ENCODE measurements at regions of chr1 and their contacts with region 1.

Region 1: DNA sequence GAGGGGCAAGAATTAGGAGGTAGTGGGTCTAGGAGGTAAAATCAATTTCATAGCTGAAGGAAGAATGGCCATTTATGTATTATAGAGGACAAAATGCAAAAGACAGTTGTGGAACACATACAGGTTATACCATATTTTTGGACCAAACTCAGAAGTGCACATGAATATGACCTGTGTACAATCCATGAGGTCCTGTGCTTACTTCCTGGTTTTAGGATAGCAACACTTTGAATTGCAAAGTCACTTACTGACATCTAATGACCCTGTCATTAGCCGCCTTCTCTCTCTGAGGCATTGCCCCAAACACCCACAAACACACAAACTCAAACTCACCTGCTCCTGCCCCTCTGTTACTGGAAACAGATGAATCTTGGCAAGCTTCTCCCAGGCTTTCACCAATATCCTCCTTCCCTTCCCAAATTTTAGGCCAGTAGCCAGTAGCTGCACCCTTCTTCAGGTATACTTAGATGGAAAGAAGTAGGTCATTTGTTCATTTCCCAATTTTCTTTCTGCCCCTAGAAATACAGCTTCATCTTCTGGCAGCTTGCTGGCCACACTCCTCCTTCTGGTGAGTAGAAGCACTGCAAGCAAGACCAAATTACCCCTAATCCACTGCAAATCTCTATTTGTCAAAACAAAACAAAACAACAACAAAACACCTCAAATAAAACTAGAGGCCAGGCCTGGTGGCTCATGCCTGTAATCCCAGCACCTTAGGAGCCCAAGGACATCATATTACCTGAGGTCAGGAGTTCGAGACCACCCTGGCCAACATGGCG is 13.7 kb upstream of the RPL5 start:
- DNase-seq: peak; percentile 16
- H3K4me3 Mint-ChIP-seq: no peak overlapping the region
- H3K27ac Mint-ChIP-seq: no peak overlapping the region
- H3K4me1 Mint-ChIP-seq: no peaks in the 10 kb centered on the region
- H3K27me3 Mint-ChIP-seq: no peaks in the 10 kb centered on the region

Region 2: DNA sequence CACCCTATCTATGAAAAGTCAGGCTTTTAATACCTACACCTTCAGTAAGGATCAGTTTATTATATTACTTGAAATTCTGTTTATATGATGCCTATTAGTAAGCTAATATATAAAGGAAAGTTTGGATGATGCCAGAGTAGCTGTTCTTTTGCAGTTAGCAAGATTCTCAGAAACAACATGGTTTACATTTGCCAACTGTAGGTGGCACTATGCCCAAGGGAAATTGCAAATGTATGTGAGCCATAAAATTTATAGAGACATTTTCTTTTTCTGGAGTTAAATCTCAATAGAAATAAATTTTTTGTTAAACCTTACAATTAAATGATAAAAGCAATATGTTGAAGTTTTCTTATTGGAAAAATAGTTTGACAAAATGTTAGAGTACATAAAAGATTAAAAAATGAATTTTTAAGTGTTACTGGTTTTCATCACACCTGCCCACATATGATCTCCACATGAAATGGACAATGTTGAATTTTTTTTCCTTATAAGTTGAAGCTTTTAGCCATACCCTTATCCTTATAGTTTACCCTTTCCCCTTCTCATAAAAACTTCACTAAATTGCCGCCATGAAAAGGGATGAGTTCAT is 820.5 kb before region 1 on chr1:
- CTCF ChIA-PET with region 1: interaction called, 4 read pairs
- intact Hi-C with region 1: loop called (anchors 1 kb)
- DNase-seq: peak; percentile 71
- H3K4me3 Mint-ChIP-seq: no peak overlapping the region
- H3K27ac Mint-ChIP-seq: no peak overlapping the region
- H3K4me1 Mint-ChIP-seq: no peaks in the 10 kb centered on the region
- H3K27me3 Mint-ChIP-seq: no peaks in the 10 kb centered on the region

Region 3: DNA sequence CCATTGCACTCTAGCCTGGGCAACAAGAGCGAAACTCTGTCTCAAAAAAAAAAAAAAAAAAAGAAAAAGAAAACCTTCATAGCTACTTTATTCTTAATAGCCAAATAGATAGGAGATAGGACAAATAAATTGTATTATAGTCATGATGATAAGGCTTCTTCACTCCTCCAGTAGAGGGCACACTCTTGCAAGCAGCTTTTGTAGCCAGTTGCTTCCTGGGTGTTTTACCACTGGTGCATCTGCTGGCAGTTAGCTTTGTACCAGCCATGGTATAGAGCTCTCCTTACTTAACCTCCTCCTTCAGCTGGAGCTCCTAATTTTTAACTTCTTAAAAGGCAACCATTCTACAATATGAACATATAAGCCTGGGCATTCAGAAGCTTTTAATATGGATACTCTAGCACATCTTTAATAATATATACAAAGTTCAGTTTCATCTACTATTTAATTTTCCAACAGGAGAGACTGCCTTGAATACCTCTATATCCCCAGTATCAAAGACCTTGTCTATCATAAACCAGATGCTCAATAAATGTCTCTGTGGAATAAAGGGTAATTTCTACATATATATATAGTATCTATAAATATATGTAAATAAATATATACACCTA is 69.0 kb before region 1 on chr1:
- CTCF ChIA-PET with region 1: interaction called, 105 read pairs
- intact Hi-C with region 1: loop called (anchors 1 kb)
- DNase-seq: peak; percentile 60
- H3K4me3 Mint-ChIP-seq: no peak overlapping the region
- H3K27ac Mint-ChIP-seq: no peak overlapping the region
- H3K4me1 Mint-ChIP-seq: no peaks in the 10 kb centered on the region
- H3K27me3 Mint-ChIP-seq: no peaks in the 10 kb centered on the region

Region 4: GRCh38 chr1:93015590-93015989 is 197.4 kb after region 1 on chr1:
- CTCF ChIA-PET with region 1: no interaction called
- intact Hi-C with region 1: no loop called
- DNase-seq: no peak
- H3K4me3 Mint-ChIP-seq: no peak overlapping the region
- H3K27ac Mint-ChIP-seq: no peak overlapping the region
- H3K4me1 Mint-ChIP-seq: peaks cover 2% of the 10 kb centered on the region
- H3K27me3 Mint-ChIP-seq: peaks cover 6% of the 10 kb centered on the region

Measured in activated naive CD4-positive, alpha-beta T cell treated with anti-CD3 and anti-CD28 coated beads for 36 hours (primary cell).